ENCODE measurements at regions of chr15 and their contacts with region 1.

Region 1: GRCh38 chr15:40266828-40267304 is 16.0 kb downstream of the ANKRD63 start:
- DNase-seq: peak in 1 of 2 donors; percentile 32
- ATAC-seq: peak in 5 of 8 donors; percentile 45 to 81 (median 56)
- H3K4me3 ChIP-seq: no peak overlapping the region
- H3K27ac ChIP-seq: no peak overlapping the region
- H3K4me1 ChIP-seq: peaks cover 0 to 10% (median 0%) of the 10 kb centered on the region in 9 donors
- H3K27me3 ChIP-seq: no peaks in the 10 kb centered on the region
- CTCF ChIP-seq: no peak

Region 2: GRCh38 chr15:39925112-39925842 is 341.6 kb before region 1 on chr15:
- intact Hi-C with region 1: no loop called
- DNase-seq: no peak
- ATAC-seq: no peak
- H3K4me3 ChIP-seq: no peak overlapping the region
- H3K27ac ChIP-seq: no peak overlapping the region
- H3K4me1 ChIP-seq: peaks cover 0 to 10% (median 8%) of the 10 kb centered on the region in 9 donors
- H3K27me3 ChIP-seq: peaks cover 0 to 4% (median 1%) of the 10 kb centered on the region in 7 donors
- CTCF ChIP-seq: no peak

Region 3: DNA sequence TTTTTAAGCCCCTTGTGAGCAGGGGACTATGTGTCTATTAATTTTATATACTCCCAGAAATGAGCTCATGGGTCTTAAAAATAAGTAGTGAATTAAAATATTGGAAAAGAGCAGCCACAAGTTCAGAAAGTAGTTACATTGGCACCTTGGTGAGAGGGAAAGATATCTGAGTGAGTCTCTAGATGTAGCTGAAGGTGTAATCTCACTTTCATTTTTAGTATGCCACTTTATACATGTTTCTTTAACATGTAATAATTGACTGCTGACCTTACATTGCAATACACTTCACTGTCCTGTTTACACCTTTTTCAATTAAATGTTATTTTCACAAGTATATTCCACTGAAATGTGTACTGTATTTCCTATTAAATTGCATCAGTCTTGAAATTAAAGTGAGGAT is 40.1 kb before region 1 on chr15:
- intact Hi-C with region 1: loop called in 2 of 10 experiments (anchors 5 kb)
- DNase-seq: no peak
- ATAC-seq: no peak
- H3K4me3 ChIP-seq: no peak overlapping the region
- H3K27ac ChIP-seq: no peak overlapping the region
- H3K4me1 ChIP-seq: no peaks in the 10 kb centered on the region
- H3K27me3 ChIP-seq: no peaks in the 10 kb centered on the region
- CTCF ChIP-seq: no peak

Region 4: GRCh38 chr15:40232625-40233070 is 34.2 kb before region 1 on chr15:
- intact Hi-C with region 1: loop called in 2 of 10 experiments (anchors 5 kb)
- DNase-seq: no peak
- ATAC-seq: peak in 3 of 8 donors; percentile 21 to 33 (median 29)
- H3K4me3 ChIP-seq: no peak overlapping the region
- H3K27ac ChIP-seq: peak overlapping the region in 1 of 10 donors; percentile 26
- H3K4me1 ChIP-seq: peaks cover 0 to 31% (median 0%) of the 10 kb centered on the region in 9 donors
- H3K27me3 ChIP-seq: peaks cover 0 to 1% (median 0%) of the 10 kb centered on the region in 7 donors
- CTCF ChIP-seq: no peak